ENCODE measurements at regions of chr10 and their contacts with region 1.

Region 1: DNA sequence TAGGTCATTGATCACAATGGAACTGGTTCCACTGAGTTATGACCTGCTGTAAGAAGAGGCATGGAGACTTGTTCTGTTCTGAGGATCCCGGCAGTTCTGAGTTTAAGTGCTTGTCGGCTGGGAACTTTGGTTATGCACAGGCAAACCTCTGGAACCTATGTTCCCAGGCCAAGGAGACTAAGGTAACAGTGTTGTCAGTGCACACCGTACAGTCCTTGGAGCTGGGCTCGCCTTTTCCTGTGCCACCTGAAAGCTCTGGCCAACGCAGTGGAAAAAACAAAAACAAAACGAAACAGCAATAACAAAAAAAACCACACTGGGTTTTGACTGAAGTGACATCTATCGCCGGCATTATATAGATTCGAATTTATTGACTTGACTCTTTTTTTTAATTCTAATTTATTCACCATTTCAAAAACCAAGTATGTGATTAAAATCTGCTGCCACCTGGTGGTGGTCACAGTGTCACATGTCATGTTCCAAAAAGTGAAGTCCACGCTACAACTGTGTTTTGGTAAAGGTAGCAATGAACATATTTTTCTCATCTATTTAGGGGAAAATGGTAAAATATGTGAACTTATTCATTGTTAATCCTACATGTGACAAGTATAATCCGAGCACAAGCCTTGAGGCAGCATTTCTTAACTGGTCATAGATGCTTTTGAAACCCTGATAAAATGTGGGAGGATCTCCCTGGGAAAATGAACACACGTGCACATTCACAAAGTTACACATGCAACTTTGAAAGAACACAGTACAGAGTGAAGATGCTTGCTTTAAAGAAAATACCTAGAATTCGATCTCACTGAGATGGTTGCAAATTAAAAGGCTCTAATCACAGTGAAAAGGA is 113.8 kb upstream of the PPP2R2D start:
- DNase-seq: no peak
- H3K4me3 ChIP-seq: no peak overlapping the region
- H3K27ac ChIP-seq: no peak overlapping the region
- H3K4me1 ChIP-seq: no peaks in the 10 kb centered on the region
- H3K27me3 ChIP-seq: peaks cover 0 to 24% (median 0%) of the 10 kb centered on the region in 7 donors
- CTCF ChIP-seq: peak in 9 of 11 experiments; percentile 45 to 73 (median 68)
- POLR2A ChIP-seq: no peak

Region 2: DNA sequence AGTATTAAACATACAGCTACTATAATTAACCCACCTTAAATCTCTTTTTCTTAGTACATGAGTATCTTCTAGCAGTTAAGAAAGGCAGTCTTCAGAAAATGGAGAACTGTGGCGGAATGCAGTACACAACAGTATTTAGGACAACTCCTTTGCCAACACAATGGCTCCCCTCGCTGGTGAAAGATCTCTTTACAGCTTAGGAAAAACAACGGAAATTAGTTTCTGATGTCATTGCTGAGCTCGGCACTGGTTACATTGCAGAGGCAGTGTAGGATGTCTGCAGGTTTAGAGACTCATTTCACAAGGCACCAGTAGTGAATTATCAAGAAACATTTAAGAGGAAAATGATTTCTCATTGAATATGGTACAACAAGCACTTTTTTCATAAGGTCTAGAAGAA is 1607.3 kb before region 1 on chr10:
- intact Hi-C with region 1: loop called (anchors 10 kb)
- DNase-seq: no peak
- H3K4me3 ChIP-seq: no peak overlapping the region
- H3K27ac ChIP-seq: no peak overlapping the region
- H3K4me1 ChIP-seq: peaks cover 0 to 21% (median 0%) of the 10 kb centered on the region in 6 donors
- H3K27me3 ChIP-seq: no peaks in the 10 kb centered on the region
- CTCF ChIP-seq: peak in 5 of 11 experiments; percentile 10 to 47 (median 19)
- POLR2A ChIP-seq: no peak

Region 3: GRCh38 chr10:131453594-131454355 is 333.2 kb before region 1 on chr10:
- intact Hi-C with region 1: loop called (anchors 10 kb)
- DNase-seq: no peak
- H3K4me3 ChIP-seq: peak overlapping the region in 3 of 8 donors; percentile 13 to 41 (median 18)
- H3K27ac ChIP-seq: no peak overlapping the region
- H3K4me1 ChIP-seq: peaks cover 0 to 12% (median 9%) of the 10 kb centered on the region in 6 donors
- H3K27me3 ChIP-seq: peaks cover 0 to 55% (median 8%) of the 10 kb centered on the region in 7 donors
- CTCF ChIP-seq: peak; percentile 47 to 90 (median 80)
- POLR2A ChIP-seq: no peak